T-cell (primary cell): ENCODE measurements at regions of chr9 and their contacts with region 1.

Region 1: DNA sequence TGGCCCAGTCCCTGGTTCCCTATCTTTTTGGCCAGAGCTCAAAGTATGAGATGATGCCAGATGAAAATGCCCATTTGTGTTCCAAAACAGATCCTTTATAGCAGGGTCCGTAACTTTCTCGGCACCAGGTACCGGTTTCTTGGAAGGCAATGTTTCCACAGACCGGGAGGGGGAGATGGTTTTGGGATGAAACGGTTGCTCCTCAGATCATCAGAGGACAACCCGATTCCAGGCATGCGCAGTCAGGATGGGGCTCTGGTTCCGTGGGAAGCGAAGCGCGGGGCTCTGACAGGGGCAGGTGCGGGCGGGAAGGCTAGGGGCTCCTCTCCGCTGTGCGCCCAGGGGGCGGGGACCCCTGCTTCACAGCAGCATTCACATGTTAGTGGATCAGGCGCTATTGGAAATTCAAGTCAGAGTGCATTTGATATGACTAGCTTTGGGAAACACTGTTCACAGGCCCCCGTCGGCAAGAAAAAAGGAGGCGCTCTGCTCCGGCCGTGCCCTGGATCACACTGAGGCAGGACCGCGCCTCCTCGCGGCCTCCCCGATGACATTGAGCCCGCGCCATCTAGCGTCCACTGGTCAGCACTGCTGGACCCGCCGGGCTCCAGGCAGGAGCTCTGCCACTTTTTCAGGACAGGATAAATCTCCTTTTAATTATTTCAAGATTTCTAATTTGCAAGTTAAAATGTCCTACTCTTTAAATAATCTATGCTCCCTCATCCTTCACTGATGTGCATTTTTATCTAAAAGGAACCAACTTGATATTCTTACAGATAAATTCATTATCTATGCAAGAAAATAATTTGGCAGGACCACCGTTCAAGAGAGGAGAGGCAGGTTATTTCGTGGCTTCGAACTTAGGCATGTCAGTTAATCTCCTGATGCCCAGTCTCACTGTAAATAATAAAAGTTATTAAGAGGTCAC is 190.0 kb downstream of the FANCC start:
- DNase-seq: peak; percentile 12 to 74 (median 55)
- ATAC-seq: peak; percentile 81 to 85 (median 82)
- H3K4me3 ChIP-seq: no peak overlapping the region
- H3K4me3 Mint-ChIP-seq: no peak overlapping the region
- H3K27ac ChIP-seq: no peak overlapping the region
- H3K27ac Mint-ChIP-seq: no peak overlapping the region
- H3K4me1 ChIP-seq: peaks cover 0 to 5% of the 10 kb centered on the region in 2 experiments
- H3K4me1 Mint-ChIP-seq: peaks cover 0 to 7% (median 4%) of the 10 kb centered on the region in 3 donors
- H3K27me3 ChIP-seq: no peaks in the 10 kb centered on the region
- H3K27me3 Mint-ChIP-seq: no peaks in the 10 kb centered on the region

Region 2: GRCh38 chr9:94681508-94681907 is 446.0 kb before region 1 on chr9:
- CTCF ChIA-PET with region 1: interaction called, 17 to 124 read pairs
- POLR2A ChIA-PET with region 1: interaction called in 1 of 2 experiments, 5 read pairs
- DNase-seq: peak; percentile 13 to 78 (median 49)
- ATAC-seq: peak; percentile 78 to 85 (median 82)
- H3K4me3 ChIP-seq: no peak overlapping the region
- H3K4me3 Mint-ChIP-seq: no peak overlapping the region
- H3K27ac ChIP-seq: no peak overlapping the region
- H3K27ac Mint-ChIP-seq: no peak overlapping the region
- H3K4me1 ChIP-seq: peaks cover 0 to 3% of the 10 kb centered on the region in 2 experiments
- H3K4me1 Mint-ChIP-seq: peaks cover 0 to 4% (median 0%) of the 10 kb centered on the region in 3 donors
- H3K27me3 ChIP-seq: peaks cover 0 to 2% of the 10 kb centered on the region in 2 experiments
- H3K27me3 Mint-ChIP-seq: peaks cover 11 to 19% of the 10 kb centered on the region in 2 donors

Region 3: DNA sequence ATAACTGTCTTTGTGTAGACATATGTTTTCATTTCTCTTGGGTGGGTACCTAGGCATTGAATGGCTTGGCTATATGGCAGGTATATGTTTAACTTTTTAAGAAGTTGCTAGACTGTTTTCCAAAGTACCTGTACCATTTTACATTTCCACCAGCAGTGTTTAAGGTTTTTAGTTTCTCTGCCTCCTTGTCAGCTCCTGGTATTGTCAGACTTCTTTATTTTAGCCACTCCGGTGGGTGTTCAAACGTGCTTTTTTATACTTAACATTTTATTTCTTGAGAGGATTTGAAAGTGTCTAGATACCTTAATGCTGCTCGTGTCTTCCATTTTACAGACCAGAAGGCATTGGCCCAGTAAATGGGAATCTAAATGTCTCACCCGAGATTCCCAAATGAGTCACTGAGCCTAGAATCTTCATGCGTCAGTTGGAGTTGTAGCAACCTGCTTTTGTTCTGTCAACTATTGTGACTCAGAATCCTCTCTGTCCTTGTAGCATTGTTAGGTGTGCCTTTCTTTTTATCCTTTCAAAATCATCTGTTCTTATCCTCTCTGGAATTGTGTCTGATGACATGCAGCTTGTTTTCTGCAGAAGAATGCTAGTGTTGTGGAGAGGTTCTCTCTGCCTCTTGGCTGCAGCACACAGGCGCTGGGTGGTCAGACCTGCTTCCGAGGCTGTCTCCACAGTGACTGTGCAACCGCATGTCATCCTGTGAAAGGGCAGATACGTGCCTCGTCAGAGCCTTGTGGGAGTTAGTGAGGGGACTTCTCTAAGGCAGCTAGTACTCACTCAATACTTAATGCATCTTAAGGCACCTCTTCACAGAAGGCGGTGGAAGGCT is 109.2 kb before region 1 on chr9:
- CTCF ChIA-PET with region 1: no interaction called
- POLR2A ChIA-PET with region 1: no interaction called
- DNase-seq: peak in 1 of 35 experiments; percentile 12
- ATAC-seq: no peak
- H3K4me3 ChIP-seq: no peak overlapping the region
- H3K4me3 Mint-ChIP-seq: no peak overlapping the region
- H3K27ac ChIP-seq: no peak overlapping the region
- H3K27ac Mint-ChIP-seq: no peak overlapping the region
- H3K4me1 ChIP-seq: no peaks in the 10 kb centered on the region
- H3K4me1 Mint-ChIP-seq: no peaks in the 10 kb centered on the region
- H3K27me3 ChIP-seq: no peaks in the 10 kb centered on the region
- H3K27me3 Mint-ChIP-seq: no peaks in the 10 kb centered on the region

Region 4: DNA sequence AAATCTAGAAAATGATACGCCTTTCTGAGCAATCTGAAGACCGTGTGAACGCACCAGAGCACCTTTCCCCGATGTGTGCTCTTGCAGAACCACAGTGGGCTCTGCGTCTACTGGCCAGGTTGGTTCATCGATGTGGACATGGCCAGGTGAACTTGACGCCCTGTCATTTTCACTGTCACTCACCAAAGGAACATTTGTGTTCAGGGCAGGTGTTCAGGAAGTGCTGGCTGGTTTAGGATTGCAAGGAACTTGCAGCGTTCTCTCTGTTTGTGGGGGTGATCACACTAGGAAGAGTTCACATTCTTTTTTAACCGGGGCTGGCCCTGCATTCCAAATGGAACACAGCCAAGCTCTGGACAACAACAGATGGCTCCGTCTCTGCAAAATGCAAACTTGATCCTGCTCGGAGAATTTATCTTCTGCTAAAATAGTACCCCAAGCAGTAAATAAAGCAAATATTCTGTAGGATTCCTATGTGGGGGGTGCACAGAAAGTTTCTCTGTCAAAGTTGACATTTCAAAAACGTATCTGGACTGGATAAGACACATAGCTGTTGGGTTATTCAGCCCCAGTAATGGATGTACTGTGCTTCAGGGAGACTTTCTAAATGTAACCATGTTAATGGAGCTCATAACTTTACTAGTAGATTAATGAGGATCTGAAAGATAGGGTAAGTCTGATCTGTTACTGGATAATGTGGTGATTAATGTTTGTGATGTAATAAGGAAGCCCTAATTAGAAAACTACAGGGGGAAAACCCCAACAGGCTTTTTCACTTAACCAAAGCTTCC is 235.7 kb after region 1 on chr9:
- CTCF ChIA-PET with region 1: interaction called in 1 of 2 experiments, 13 read pairs
- POLR2A ChIA-PET with region 1: no interaction called
- DNase-seq: no peak
- ATAC-seq: no peak
- H3K4me3 ChIP-seq: no peak overlapping the region
- H3K4me3 Mint-ChIP-seq: no peak overlapping the region
- H3K27ac ChIP-seq: no peak overlapping the region
- H3K27ac Mint-ChIP-seq: no peak overlapping the region
- H3K4me1 ChIP-seq: no peaks in the 10 kb centered on the region
- H3K4me1 Mint-ChIP-seq: no peaks in the 10 kb centered on the region
- H3K27me3 ChIP-seq: peaks cover 2 to 18% of the 10 kb centered on the region in 2 experiments
- H3K27me3 Mint-ChIP-seq: peaks cover 28 to 39% of the 10 kb centered on the region in 2 donors